ENCODE measurements at regions of chr4 and their contacts with region 1.

Region 1: DNA sequence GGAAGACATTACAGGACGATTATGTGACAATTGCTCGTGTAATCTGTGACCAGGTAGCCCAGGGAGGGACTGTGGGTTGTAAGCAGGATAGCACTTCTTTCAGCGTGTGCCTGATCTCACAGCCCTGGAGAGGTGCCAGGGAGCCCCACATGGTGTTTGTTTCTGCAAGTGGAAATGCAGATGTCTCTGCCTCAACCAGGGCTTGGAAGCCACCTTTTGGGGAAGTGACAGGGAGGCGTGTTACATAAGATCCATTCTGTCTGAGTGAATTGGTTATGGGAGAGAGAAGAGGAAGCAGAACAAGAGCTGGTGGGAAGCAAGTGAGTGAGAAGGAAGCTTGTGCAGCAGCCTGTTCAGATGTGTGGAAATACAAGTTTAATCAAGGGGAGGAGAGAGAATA is 104.5 kb upstream of the GATB start:
- DNase-seq: no peak
- CTCF ChIP-seq: no peak

Region 2: DNA sequence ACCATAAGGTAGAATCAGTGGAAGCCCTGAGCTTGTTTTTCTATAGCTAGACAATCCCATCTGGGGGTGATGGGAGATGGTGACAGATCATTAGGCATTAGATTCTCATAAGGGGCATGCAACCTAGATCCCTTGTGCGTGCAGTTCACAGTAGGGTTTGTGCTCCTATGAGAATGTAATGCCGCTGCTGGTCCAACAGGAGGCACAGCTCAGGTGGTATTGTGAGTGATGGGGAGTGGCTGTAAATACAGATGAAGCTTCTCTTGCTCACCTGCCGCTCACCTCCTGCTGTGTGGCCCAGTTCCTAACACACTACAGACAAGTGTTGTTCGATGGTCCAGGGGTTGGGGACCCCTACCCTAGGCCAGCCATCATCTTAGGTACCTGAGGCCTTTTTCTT is 98.6 kb before region 1 on chr4:
- CTCF ChIA-PET with region 1: no interaction called
- POLR2A ChIA-PET with region 1: no interaction called
- DNase-seq: no peak
- CTCF ChIP-seq: no peak

Region 3: GRCh38 chr4:151879705-151880445 is 14.6 kb after region 1 on chr4:
- CTCF ChIA-PET with region 1: interaction called, 16 read pairs
- POLR2A ChIA-PET with region 1: no interaction called
- DNase-seq: no peak
- CTCF ChIP-seq: no peak